ENCODE measurements at regions of chr21 and their contacts with region 1.

Region 1: DNA sequence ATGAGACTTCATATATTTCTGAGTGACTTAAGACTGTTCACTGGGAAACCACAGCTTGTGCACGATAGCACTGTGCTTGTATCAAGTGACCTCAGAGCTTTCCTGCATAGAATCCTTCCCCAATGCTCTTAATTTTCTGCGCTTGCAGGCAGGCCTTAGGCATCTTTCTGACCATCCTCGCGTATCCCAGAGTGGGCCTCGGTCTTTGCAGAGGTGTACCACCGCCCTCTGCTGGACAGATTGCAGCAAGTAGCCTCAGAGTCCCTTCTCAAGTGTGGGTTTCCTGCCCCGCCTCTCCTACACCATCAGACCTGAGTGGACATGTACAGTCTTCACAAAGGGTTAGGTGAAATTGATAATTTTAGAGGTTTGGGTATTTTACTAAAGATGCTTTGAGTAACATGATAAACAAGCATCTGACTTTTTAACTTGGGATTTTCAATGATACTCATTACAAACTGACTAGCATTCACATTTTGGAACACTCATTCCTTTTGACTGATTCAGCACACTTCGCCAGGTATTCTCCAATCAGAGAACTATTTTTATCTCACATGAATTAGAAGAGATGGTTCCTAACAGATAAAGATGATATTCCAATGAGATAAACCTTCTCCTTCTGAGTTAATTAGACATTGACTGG is 246.5 kb upstream of the USP25 start:
- DNase-seq: peak; percentile 76
- H3K4me3 ChIP-seq: no peak overlapping the region
- H3K27ac ChIP-seq: no peak overlapping the region
- H3K27me3 ChIP-seq: no peaks in the 10 kb centered on the region
- CTCF ChIP-seq: peak; percentile 93

Region 2: GRCh38 chr21:14403681-14404318 is 1079.5 kb before region 1 on chr21:
- CTCF ChIA-PET with region 1: interaction called, 30 read pairs
- POLR2A ChIA-PET with region 1: no interaction called
- DNase-seq: no peak
- H3K4me3 ChIP-seq: no peak overlapping the region
- H3K27ac ChIP-seq: no peak overlapping the region
- H3K27me3 ChIP-seq: no peaks in the 10 kb centered on the region
- CTCF ChIP-seq: peak; percentile 66

Region 3: DNA sequence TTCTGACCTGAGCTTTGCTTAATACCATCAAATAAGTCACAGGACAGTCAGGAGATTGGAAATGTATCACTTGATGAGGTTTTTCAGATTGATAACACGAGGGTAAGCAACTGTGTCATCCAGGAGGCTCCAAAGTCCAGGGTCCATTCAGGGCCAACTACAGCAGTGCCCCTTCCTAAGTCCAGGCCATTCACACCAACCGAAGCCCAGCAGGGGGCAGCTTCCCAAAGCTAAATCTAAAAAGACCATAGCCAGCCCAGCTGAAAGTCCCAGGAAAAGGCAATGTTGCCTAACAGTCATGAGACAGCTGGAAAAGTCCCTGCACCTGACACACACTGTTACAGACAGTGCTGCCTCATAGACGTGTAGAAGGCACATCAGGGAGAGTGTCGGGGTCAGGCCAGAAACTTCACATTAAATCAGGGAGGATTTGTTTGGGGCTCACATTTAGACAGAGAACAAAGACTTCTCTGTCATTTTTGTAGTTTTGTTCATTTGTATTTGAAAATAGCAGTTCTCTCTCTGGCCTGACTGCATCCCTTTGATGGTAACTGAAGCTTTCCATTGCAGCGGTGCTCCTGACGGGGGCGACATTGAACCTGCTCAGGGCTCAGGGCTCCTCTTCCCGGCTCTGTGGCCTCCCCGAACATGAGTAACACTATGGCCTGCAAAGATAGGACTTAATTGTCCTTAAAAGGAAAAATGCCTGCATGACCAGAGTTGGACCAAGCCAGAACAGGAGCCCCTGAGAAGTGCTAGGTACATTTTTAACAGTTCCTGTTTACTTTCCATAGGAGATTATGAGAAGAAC is 618.8 kb before region 1 on chr21:
- CTCF ChIA-PET with region 1: interaction called, 21 read pairs
- POLR2A ChIA-PET with region 1: no interaction called
- DNase-seq: peak; percentile 42
- H3K4me3 ChIP-seq: no peak overlapping the region
- H3K27ac ChIP-seq: no peak overlapping the region
- H3K27me3 ChIP-seq: no peaks in the 10 kb centered on the region
- CTCF ChIP-seq: peak; percentile 76

Region 4: GRCh38 chr21:15472108-15473040 is 10.9 kb before region 1 on chr21:
- CTCF ChIA-PET with region 1: interaction called, 12 read pairs
- POLR2A ChIA-PET with region 1: no interaction called
- DNase-seq: no peak
- H3K4me3 ChIP-seq: no peak overlapping the region
- H3K27ac ChIP-seq: no peak overlapping the region
- H3K27me3 ChIP-seq: no peaks in the 10 kb centered on the region
- CTCF ChIP-seq: no peak

Region 5: GRCh38 chr21:15706692-15707091 is 223.4 kb after region 1 on chr21:
- CTCF ChIA-PET with region 1: no interaction called
- POLR2A ChIA-PET with region 1: no interaction called
- DNase-seq: peak; percentile 88
- H3K4me3 ChIP-seq: no peak overlapping the region
- H3K27ac ChIP-seq: no peak overlapping the region
- H3K27me3 ChIP-seq: no peaks in the 10 kb centered on the region
- CTCF ChIP-seq: no peak

Region 6: GRCh38 chr21:15908187-15908586 is 424.9 kb after region 1 on chr21:
- CTCF ChIA-PET with region 1: no interaction called
- POLR2A ChIA-PET with region 1: no interaction called
- DNase-seq: no peak
- H3K4me3 ChIP-seq: no peak overlapping the region
- H3K27ac ChIP-seq: no peak overlapping the region
- H3K27me3 ChIP-seq: no peaks in the 10 kb centered on the region
- CTCF ChIP-seq: no peak